ENCODE measurements at regions of chrX and their contacts with region 1.

Region 1: GRCh38 chrX:112628288-112628687 is 51.5 kb downstream of the LHFPL1 start:
- DNase-seq: no peak
- ATAC-seq: no peak
- H3K4me3 ChIP-seq: no peak overlapping the region
- H3K27ac ChIP-seq: no peak overlapping the region
- H3K4me1 ChIP-seq: no peaks in the 10 kb centered on the region
- H3K27me3 ChIP-seq: no peaks in the 10 kb centered on the region
- CTCF ChIP-seq: no peak
- EP300 ChIP-seq: no peak
- POLR2A ChIP-seq: no peak
- RAD21 ChIP-seq: no peak

Region 2: GRCh38 chrX:112424166-112424565 is 204.1 kb before region 1 on chrX:
- CTCF ChIA-PET with region 1: no interaction called
- POLR2A ChIA-PET with region 1: no interaction called
- in situ Hi-C with region 1: no loop called
- intact Hi-C with region 1: loop called (anchors 5 kb)
- DNase-seq: no peak
- ATAC-seq: no peak
- H3K4me3 ChIP-seq: no peak overlapping the region
- H3K27ac ChIP-seq: no peak overlapping the region
- H3K4me1 ChIP-seq: no peaks in the 10 kb centered on the region
- H3K27me3 ChIP-seq: no peaks in the 10 kb centered on the region
- CTCF ChIP-seq: no peak
- EP300 ChIP-seq: no peak
- POLR2A ChIP-seq: no peak
- RAD21 ChIP-seq: no peak

Region 3: GRCh38 chrX:112688242-112688641 is 60.0 kb after region 1 on chrX:
- CTCF ChIA-PET with region 1: no interaction called
- POLR2A ChIA-PET with region 1: no interaction called
- in situ Hi-C with region 1: no loop called
- intact Hi-C with region 1: no loop called
- DNase-seq: no peak
- ATAC-seq: no peak
- H3K4me3 ChIP-seq: no peak overlapping the region
- H3K27ac ChIP-seq: no peak overlapping the region
- H3K4me1 ChIP-seq: no peaks in the 10 kb centered on the region
- H3K27me3 ChIP-seq: no peaks in the 10 kb centered on the region
- CTCF ChIP-seq: no peak
- EP300 ChIP-seq: no peak
- POLR2A ChIP-seq: no peak
- RAD21 ChIP-seq: no peak